CD4-positive, alpha-beta T cell (primary cell): ENCODE measurements at regions of chr1 and their contacts with region 1.

Region 1: DNA sequence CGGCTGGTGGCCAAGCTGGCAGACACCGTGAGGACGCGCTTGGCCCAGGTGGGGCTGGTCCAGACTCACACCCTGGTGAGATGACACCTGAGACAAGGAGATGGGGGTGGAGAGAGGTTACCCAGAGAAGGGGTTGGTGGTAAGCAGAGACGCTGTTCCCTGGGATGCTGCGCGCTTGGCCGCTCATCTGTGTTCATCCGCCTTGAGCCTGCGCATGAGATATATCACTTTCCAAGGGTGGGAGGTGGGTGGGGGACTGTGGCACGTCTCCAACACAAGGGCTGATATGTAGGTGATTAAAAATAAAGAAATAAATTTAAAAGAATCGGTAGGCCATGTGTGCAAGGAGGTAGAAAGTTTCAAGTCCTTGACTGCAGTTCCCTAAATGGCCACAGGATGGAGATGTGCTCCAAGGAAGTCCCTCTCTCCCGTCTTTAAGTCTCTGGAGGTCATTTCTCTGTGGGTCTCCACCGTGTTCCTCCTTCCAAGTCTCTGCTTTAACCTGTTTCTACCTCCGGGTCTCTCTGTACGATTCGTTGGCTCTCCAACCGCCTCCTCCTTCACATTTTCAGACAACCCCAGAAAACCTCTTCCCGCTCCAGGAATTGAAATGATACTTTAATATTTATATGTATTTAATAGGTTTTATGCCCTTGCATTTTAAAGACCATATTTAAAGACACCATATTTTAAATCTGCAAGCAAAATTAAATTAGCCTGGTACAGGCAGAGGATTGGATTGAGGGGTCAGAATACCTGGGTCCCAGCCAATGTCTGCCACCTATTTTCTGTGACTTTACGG is 4.5 kb downstream of the TTC24 start:
- DNase-seq: peak; percentile 44 to 90 (median 69)
- ATAC-seq: peak; percentile 63
- H3K4me3 ChIP-seq: no peak overlapping the region
- H3K4me3 Mint-ChIP-seq: peak overlapping the region; percentile 63
- H3K27ac ChIP-seq: no peak overlapping the region
- H3K27ac Mint-ChIP-seq: peak overlapping the region; percentile 90
- H3K4me1 ChIP-seq: peaks cover 32% of the 10 kb centered on the region
- H3K4me1 Mint-ChIP-seq: peaks cover 33% of the 10 kb centered on the region
- H3K27me3 ChIP-seq: no peaks in the 10 kb centered on the region
- H3K27me3 Mint-ChIP-seq: no peaks in the 10 kb centered on the region
- CTCF ChIP-seq: peak; percentile 85

Region 2: DNA sequence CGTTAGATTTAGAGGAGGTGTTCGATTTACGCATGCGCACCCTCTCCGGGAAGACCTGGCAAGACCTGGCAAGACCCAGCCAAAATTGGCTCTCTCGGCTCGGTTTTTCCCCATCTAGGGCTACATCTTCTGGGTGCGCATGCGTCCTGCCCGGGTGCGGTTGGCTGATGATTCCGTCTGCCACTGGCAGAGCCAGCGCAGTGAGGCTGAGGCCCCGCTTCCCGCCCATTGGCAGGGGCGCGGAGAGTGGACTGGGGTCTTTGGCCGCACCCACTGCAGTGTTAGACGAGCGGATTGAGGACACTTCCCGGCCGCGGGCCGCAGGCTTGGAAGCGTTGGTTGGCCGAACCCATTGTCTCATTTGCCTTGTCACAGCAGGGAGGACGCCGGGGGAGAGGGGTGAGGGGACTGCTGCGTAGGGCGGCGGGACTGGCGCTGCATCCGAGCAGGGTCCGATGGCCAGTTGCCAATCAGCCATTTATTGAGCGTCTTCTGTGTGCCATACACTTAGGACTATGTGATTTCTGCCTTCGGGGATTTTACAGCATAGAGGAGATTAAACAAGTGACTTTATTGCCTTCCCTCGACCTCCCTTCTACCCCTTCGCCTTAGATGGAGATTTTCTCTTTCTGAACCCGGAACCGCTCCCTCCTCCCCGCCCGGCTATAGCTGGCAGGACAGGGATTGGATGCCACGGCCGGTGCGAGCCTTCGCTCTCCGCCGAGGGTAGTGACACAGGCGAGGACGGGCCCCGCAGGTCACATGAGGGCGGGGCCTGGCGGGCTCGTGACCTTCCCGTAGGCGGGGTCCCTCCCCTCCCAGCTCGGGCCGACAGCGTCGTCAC is 127.2 kb before region 1 on chr1:
- CTCF ChIA-PET with region 1: no interaction called
- POLR2A ChIA-PET with region 1: interaction called, 12 read pairs
- intact Hi-C with region 1: no loop called
- DNase-seq: peak; percentile 93 to 99 (median 96)
- ATAC-seq: peak; percentile 80
- H3K4me3 ChIP-seq: peak overlapping the region; percentile 56
- H3K4me3 Mint-ChIP-seq: peak overlapping the region; percentile 94
- H3K27ac ChIP-seq: peak overlapping the region; percentile 93 to 100
- H3K27ac Mint-ChIP-seq: peak overlapping the region; percentile 100
- H3K4me1 ChIP-seq: peaks cover 19% of the 10 kb centered on the region
- H3K4me1 Mint-ChIP-seq: peaks cover 25% of the 10 kb centered on the region
- H3K27me3 ChIP-seq: no peaks in the 10 kb centered on the region
- H3K27me3 Mint-ChIP-seq: no peaks in the 10 kb centered on the region
- CTCF ChIP-seq: no peak